ENCODE measurements at regions of chr7 and their contacts with region 1.

Region 1: GRCh38 chr7:26398756-26399501 is 107.3 kb downstream of the SNX10 start:
- DNase-seq: peak; percentile 78
- H3K4me3 ChIP-seq: peak overlapping the region; percentile 12 to 65 (median 61)
- H3K27ac ChIP-seq: peak overlapping the region; percentile 39
- H3K4me1 ChIP-seq: peaks cover 11% of the 10 kb centered on the region
- H3K27me3 ChIP-seq: no peaks in the 10 kb centered on the region
- CTCF ChIP-seq: peak; percentile 42 to 65
- POLR2A ChIP-seq: no peak

Region 2: DNA sequence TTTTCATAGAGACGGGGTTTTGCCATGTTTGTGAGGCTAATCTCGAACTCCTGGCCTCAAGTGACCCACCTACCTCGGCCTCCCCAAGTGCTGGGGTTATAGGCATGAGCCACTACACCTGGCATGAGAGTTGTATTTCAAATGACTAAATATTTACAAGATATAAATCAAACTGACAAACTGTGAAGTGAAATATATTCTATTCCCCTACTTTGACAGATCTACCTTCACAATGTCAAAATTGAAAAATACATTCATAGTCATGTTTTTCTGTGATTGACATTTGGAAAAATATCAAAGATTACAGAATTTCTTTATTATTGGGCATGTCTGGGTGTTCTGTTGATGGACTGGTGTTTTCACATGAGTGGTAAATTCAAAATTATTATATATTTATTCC is 123.7 kb before region 1 on chr7:
- CTCF ChIA-PET with region 1: no interaction called
- POLR2A ChIA-PET with region 1: no interaction called
- dilution Hi-C with region 1: no loop called
- intact Hi-C with region 1: no loop called
- DNase-seq: no peak
- H3K4me3 ChIP-seq: no peak overlapping the region
- H3K27ac ChIP-seq: no peak overlapping the region
- H3K4me1 ChIP-seq: no peaks in the 10 kb centered on the region
- H3K27me3 ChIP-seq: no peaks in the 10 kb centered on the region
- CTCF ChIP-seq: no peak
- POLR2A ChIP-seq: no peak

Region 3: DNA sequence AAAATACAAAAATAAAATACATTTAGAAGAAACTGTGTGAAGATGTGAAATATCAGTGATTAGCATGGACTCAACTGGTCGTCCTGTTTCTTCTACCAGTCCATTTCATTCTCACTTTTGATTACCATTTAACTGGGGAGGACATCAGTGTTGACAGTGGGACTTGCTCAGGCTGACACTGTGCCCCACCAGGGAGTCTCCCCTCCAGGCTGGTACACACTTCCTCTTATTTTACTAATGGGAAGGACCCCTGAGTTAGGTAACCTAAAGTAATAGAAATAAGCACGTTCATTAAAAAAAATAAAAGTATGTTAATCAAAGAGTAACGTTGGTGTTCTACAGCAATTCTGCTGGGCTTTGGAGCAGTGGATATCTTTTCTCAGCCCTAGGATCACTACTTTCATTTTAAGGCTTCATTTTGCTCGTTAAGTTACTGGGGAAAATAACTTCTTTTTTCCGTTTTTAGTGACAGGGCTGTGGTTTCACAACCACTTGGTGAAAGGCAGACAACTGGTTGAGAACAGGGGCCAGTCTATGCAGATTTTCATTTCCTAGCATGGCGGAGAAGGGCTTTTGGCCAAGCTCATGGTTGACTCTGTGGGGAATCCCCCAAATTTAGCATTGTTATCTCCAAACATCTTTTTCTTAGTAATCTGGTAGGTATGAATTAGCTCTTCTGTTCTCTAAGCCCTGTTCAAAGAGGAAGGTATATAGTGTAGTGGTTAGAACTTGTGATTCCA is 105.2 kb before region 1 on chr7:
- CTCF ChIA-PET with region 1: no interaction called
- POLR2A ChIA-PET with region 1: no interaction called
- dilution Hi-C with region 1: no loop called
- intact Hi-C with region 1: no loop called
- DNase-seq: no peak
- H3K4me3 ChIP-seq: no peak overlapping the region
- H3K27ac ChIP-seq: no peak overlapping the region
- H3K4me1 ChIP-seq: peaks cover 5% of the 10 kb centered on the region
- H3K27me3 ChIP-seq: peaks cover 0 to 3% of the 10 kb centered on the region in 2 experiments
- CTCF ChIP-seq: no peak
- POLR2A ChIP-seq: no peak

Region 4: DNA sequence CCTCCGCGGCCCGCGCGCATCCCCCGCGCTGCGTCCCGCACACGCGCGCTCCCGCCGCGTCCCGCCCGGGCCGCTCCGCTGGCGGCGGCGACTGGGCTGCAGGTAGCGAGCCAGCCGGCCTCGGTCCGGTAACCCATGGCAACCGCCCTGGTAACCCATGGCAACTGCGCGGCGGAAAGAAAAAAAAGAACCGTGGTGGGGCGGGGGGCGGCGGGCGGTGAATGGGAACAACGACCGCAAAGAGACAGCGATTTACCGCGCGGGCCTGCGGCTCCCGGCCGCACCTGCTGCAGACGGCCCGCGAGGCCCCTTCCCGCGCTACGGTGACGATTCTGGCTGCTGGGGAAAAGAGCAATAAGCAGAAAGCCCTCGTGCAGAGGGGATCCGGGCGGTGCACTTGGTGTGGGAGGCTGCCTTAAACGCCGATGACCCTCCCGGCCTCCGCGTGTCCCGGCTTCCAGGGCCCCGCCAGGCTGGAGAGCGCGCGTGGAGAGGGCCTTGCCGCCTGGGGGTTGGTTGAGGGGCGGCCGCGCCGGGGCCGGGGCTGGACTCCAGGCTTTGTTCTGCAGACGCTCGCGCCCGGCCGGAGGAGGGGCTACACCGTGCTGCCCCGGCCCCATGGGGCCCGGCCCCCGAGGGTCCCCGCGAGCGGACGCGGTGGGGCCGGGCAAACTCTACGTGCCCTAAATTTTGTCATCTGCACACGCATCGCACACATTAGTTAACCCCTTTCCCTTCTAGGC is 22.6 kb before region 1 on chr7:
- CTCF ChIA-PET with region 1: interaction called, 13 read pairs
- POLR2A ChIA-PET with region 1: no interaction called
- dilution Hi-C with region 1: no loop called
- intact Hi-C with region 1: loop called (anchors 1 kb)
- DNase-seq: peak; percentile 74
- H3K4me3 ChIP-seq: peak overlapping the region; percentile 70 to 91 (median 76)
- H3K27ac ChIP-seq: peak overlapping the region; percentile 80
- H3K4me1 ChIP-seq: peaks cover 36% of the 10 kb centered on the region
- H3K27me3 ChIP-seq: no peaks in the 10 kb centered on the region
- CTCF ChIP-seq: no peak
- POLR2A ChIP-seq: peak; percentile 51

Region 5: DNA sequence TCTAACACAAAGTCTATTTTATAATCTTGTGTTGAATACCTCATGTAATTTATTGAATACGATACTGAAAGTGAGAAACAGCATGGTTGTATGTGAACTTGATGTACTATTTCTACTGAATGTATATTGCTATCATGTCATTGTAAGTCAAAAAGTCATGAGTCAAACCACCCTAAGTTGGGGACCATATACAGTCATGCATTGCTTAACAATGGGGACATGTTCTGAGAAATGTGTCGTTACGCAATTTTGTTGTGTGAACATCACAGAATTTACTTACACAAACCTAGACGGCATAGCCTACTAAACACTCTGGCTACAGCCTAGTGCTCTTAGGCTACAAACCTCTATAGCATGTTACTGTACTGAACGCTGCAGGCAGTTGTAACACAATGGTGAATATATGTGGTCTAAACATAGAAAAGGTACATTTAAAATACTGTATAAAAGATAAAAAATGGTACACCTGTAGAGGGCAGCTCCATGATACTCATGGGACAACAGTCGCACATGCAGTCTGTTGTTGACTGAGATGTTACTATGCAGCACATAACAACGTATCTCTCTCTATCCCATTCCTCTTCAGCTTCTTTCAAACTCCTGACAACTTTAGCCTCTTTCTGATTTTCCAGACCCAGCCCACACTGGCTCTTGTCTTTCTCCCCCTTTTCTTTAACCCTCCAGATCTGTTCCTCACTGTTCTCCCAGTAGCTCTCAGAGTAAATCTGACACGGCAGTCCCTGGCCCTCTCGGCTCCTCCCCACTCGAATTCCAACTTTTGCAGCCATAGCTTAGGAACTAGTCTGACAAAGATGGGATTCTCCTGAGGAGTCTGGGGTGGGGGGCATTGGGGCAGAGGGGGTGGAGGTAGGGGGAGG is 17.2 kb before region 1 on chr7:
- CTCF ChIA-PET with region 1: interaction called, 13 read pairs
- POLR2A ChIA-PET with region 1: no interaction called
- dilution Hi-C with region 1: no loop called
- intact Hi-C with region 1: loop called (anchors 1 kb)
- DNase-seq: no peak
- H3K4me3 ChIP-seq: no peak overlapping the region
- H3K27ac ChIP-seq: no peak overlapping the region
- H3K4me1 ChIP-seq: peaks cover 4% of the 10 kb centered on the region
- H3K27me3 ChIP-seq: peaks cover 3 to 5% of the 10 kb centered on the region in 2 experiments
- CTCF ChIP-seq: no peak
- POLR2A ChIP-seq: no peak

Region 6: GRCh38 chr7:26417911-26418413 is 19.0 kb after region 1 on chr7:
- CTCF ChIA-PET with region 1: interaction called, 15 read pairs
- POLR2A ChIA-PET with region 1: no interaction called
- dilution Hi-C with region 1: no loop called
- intact Hi-C with region 1: loop called (anchors 1 kb)
- DNase-seq: peak; percentile 98
- H3K4me3 ChIP-seq: peak overlapping the region in 1 of 3 experiments; percentile 30
- H3K27ac ChIP-seq: peak overlapping the region; percentile 99
- H3K4me1 ChIP-seq: peaks cover 23% of the 10 kb centered on the region
- H3K27me3 ChIP-seq: no peaks in the 10 kb centered on the region
- CTCF ChIP-seq: no peak
- POLR2A ChIP-seq: no peak

Region 7: DNA sequence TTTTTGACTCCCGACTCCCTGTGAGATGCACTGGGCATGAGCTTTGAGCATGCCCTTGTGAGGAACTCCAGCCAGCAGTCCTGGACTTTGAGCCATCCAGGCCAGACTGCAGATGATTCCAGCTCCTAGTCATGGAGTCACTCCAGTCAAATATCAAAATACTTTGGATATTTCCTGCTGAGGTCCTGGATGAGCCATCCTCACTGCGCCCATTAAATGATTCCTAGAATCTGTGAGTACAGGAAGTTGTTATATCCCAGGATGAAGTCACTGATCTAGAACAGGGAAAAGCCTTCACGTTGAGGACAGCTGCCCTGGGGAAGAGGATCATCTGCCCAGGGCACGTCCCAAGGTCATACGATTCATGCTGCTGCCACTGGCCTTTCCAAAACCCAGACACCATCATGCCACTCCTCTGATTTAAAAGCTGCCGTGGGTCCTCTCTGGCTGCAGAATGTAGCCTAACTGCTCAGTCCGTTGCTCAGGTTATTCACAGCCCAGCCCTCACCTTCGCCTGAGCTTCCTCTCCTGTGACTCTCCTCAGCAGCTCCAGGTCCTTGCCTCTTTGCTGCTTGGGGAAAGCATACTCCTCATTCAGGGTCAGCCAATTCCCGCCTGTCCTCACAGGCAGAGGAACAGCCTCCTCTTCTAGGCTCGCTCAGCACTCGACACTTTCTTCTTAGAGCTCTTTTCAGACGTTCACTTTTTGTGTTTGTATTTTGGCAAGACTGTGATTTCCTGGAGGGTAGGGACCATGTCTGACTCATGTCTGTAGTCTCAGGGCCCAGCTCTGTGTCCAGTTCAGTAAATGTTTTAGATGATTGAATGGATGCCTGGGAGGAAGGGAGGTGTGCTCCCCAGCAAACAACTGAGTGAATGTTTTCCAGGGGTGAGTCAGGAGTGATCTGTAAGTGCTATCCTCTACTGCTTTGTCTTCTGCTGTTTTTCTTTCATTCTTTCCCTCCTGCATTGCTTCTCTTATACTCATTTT is 50.5 kb after region 1 on chr7:
- CTCF ChIA-PET with region 1: interaction called, 8 read pairs
- POLR2A ChIA-PET with region 1: no interaction called
- dilution Hi-C with region 1: no loop called
- intact Hi-C with region 1: loop called (anchors 1 kb)
- DNase-seq: peak; percentile 96
- H3K4me3 ChIP-seq: no peak overlapping the region
- H3K27ac ChIP-seq: peak overlapping the region; percentile 80
- H3K4me1 ChIP-seq: peaks cover 37% of the 10 kb centered on the region
- H3K27me3 ChIP-seq: no peaks in the 10 kb centered on the region
- CTCF ChIP-seq: no peak
- POLR2A ChIP-seq: peak; percentile 54

Region 8: GRCh38 chr7:26500749-26501352 is 101.9 kb after region 1 on chr7:
- CTCF ChIA-PET with region 1: interaction called, 28 read pairs
- POLR2A ChIA-PET with region 1: no interaction called
- dilution Hi-C with region 1: no loop called
- intact Hi-C with region 1: loop called (anchors 1 kb)
- DNase-seq: peak; percentile 52
- H3K4me3 ChIP-seq: no peak overlapping the region
- H3K27ac ChIP-seq: no peak overlapping the region
- H3K4me1 ChIP-seq: no peaks in the 10 kb centered on the region
- H3K27me3 ChIP-seq: peaks cover 2 to 3% of the 10 kb centered on the region in 2 experiments
- CTCF ChIP-seq: peak; percentile 25 to 29
- POLR2A ChIP-seq: no peak

Region 9: GRCh38 chr7:26574476-26574875 is 175.5 kb after region 1 on chr7:
- CTCF ChIA-PET with region 1: no interaction called
- POLR2A ChIA-PET with region 1: no interaction called
- dilution Hi-C with region 1: no loop called
- intact Hi-C with region 1: no loop called
- DNase-seq: no peak
- H3K4me3 ChIP-seq: no peak overlapping the region
- H3K27ac ChIP-seq: no peak overlapping the region
- H3K4me1 ChIP-seq: no peaks in the 10 kb centered on the region
- H3K27me3 ChIP-seq: peaks cover 0 to 2% of the 10 kb centered on the region in 2 experiments
- CTCF ChIP-seq: no peak
- POLR2A ChIP-seq: no peak

Region 10: DNA sequence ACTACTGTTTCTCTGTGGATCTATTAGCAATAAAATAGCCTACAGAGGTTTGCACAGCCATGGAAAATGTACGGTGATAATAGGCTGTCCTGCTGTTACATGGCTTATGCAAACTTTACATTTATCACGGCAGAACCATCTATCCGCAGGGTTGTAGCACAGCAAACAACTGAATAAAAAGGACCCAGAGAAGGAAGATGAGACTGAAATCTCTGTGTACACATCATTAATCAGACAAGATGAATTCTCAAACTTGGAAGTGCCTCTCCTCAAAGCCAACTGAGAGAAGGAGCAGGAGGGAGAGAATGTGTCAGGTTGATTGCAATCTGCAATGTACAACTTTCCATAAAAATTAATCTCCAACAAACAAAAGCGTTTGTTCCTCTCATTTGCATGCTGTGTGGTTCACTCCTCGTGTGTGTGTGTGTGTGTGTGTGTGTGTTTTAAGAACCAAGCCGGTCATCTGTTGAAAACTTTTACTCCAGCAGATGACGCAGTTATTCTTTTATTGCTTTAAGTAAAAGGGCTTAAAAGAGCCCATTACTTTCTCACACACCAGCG is 186.2 kb after region 1 on chr7:
- CTCF ChIA-PET with region 1: no interaction called
- POLR2A ChIA-PET with region 1: no interaction called
- dilution Hi-C with region 1: no loop called
- intact Hi-C with region 1: no loop called
- DNase-seq: no peak
- H3K4me3 ChIP-seq: no peak overlapping the region
- H3K27ac ChIP-seq: no peak overlapping the region
- H3K4me1 ChIP-seq: no peaks in the 10 kb centered on the region
- H3K27me3 ChIP-seq: peaks cover 0 to 6% of the 10 kb centered on the region in 2 experiments
- CTCF ChIP-seq: no peak
- POLR2A ChIP-seq: no peak

Region 11: GRCh38 chr7:26653430-26653911 is 254.5 kb after region 1 on chr7:
- CTCF ChIA-PET with region 1: no interaction called
- POLR2A ChIA-PET with region 1: no interaction called
- dilution Hi-C with region 1: no loop called
- intact Hi-C with region 1: loop called (anchors 5 kb)
- DNase-seq: peak; percentile 89
- H3K4me3 ChIP-seq: no peak overlapping the region
- H3K27ac ChIP-seq: no peak overlapping the region
- H3K4me1 ChIP-seq: peaks cover 10% of the 10 kb centered on the region
- H3K27me3 ChIP-seq: peaks cover 0 to 3% of the 10 kb centered on the region in 2 experiments
- CTCF ChIP-seq: no peak
- POLR2A ChIP-seq: no peak